CD4-positive, alpha-beta memory T cell (primary cell): ENCODE measurements at regions of chr6 and their contacts with region 1.

Region 1: GRCh38 chr6:53294095-53294494 is 54.7 kb downstream of the ELOVL5 start:
- DNase-seq: no peak
- H3K4me3 ChIP-seq: no peak overlapping the region
- H3K4me3 Mint-ChIP-seq: peak overlapping the region in 2 of 8 donors; percentile 6 to 34
- H3K27ac ChIP-seq: peak overlapping the region; percentile 27
- H3K27ac Mint-ChIP-seq: peak overlapping the region; percentile 53 to 94 (median 83)
- H3K4me1 ChIP-seq: peaks cover 97% of the 10 kb centered on the region
- H3K4me1 Mint-ChIP-seq: peaks cover 69 to 97% (median 83%) of the 10 kb centered on the region in 4 donors
- H3K27me3 ChIP-seq: no peaks in the 10 kb centered on the region
- H3K27me3 Mint-ChIP-seq: no peaks in the 10 kb centered on the region

Region 2: GRCh38 chr6:52741872-52742271 is 552.2 kb before region 1 on chr6:
- CTCF ChIA-PET with region 1: no interaction called
- POLR2A ChIA-PET with region 1: no interaction called
- intact Hi-C with region 1: no loop called
- DNase-seq: no peak
- H3K4me3 ChIP-seq: no peak overlapping the region
- H3K4me3 Mint-ChIP-seq: no peak overlapping the region
- H3K27ac ChIP-seq: no peak overlapping the region
- H3K27ac Mint-ChIP-seq: no peak overlapping the region
- H3K4me1 ChIP-seq: no peaks in the 10 kb centered on the region
- H3K4me1 Mint-ChIP-seq: no peaks in the 10 kb centered on the region
- H3K27me3 ChIP-seq: no peaks in the 10 kb centered on the region
- H3K27me3 Mint-ChIP-seq: peaks cover 11 to 22% of the 10 kb centered on the region in 2 donors

Region 3: GRCh38 chr6:53189554-53189953 is 104.5 kb before region 1 on chr6:
- CTCF ChIA-PET with region 1: interaction called, 3 read pairs
- POLR2A ChIA-PET with region 1: no interaction called
- intact Hi-C with region 1: loop called (anchors 5 kb)
- DNase-seq: no peak
- H3K4me3 ChIP-seq: no peak overlapping the region
- H3K4me3 Mint-ChIP-seq: peak overlapping the region in 1 of 8 donors; percentile 7
- H3K27ac ChIP-seq: no peak overlapping the region
- H3K27ac Mint-ChIP-seq: no peak overlapping the region
- H3K4me1 ChIP-seq: peaks cover 22% of the 10 kb centered on the region
- H3K4me1 Mint-ChIP-seq: peaks cover 6 to 23% (median 19%) of the 10 kb centered on the region in 4 donors
- H3K27me3 ChIP-seq: no peaks in the 10 kb centered on the region
- H3K27me3 Mint-ChIP-seq: no peaks in the 10 kb centered on the region

Region 4: DNA sequence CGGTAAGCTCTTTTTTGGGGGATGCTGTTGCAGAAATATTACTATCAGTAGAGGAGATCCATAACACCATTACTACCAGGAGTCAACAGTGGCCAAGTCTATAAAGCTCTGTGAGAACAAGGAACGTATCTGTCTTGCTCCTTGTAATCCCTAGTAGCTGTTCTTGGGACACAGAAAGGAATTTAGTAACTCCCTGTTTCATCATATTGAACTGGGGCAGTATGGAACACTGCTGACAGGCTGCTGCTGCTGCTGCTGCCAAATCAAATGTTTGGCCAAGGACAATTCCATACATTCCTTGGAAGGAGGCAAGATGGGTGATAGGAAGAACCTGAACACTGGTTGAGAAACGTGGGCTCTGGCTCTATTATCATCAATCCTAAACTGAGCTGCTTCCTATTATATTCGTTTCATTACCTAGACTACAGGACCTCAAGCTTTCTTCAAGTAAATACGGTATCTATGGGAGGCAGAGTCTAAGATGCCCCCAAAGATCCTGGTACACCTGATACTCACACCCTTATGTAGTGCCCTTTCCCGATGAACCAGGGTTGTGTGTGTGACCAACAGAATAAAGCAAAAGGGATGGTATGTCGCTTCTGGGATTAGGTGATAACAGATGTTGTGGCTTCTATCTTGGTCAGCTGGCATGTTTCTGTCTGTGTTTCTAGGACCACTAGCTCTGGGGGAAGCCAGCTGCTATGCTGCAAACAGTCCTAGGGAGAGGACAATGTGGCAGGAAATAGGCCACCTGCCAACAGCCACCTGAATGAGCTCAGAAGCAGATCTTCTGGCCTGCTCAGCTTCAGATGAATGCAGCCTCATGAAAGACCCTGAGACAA is 15.2 kb after region 1 on chr6:
- CTCF ChIA-PET with region 1: interaction called, 16 read pairs
- POLR2A ChIA-PET with region 1: interaction called, 45 read pairs
- intact Hi-C with region 1: loop called (anchors 2 kb)
- DNase-seq: peak in 2 of 5 donors; percentile 24 to 48
- H3K4me3 ChIP-seq: no peak overlapping the region
- H3K4me3 Mint-ChIP-seq: peak overlapping the region in 7 of 8 donors; percentile 53 to 83 (median 65)
- H3K27ac ChIP-seq: peak overlapping the region; percentile 51
- H3K27ac Mint-ChIP-seq: peak overlapping the region; percentile 79 to 93 (median 85)
- H3K4me1 ChIP-seq: peaks cover 80% of the 10 kb centered on the region
- H3K4me1 Mint-ChIP-seq: peaks cover 72 to 84% (median 79%) of the 10 kb centered on the region in 4 donors
- H3K27me3 ChIP-seq: no peaks in the 10 kb centered on the region
- H3K27me3 Mint-ChIP-seq: no peaks in the 10 kb centered on the region

Region 5: DNA sequence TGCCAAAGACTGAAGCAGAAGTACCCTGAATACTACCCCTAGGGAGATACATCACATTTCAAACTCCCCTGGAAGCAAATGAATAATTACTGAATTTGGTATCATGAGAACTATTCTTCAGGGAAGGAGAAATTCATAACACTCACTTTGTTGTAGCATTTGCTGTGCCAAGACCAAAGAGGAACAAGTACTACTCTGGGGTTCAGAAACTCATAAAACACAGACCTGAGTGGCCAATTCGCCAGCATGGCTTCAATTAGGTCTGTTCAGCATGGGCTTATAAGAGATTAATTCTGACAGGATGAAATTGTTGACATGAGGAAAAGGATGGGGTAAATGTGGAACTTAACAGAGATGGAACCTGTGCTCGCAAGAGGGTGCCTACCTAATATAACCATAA is 48.1 kb after region 1 on chr6:
- CTCF ChIA-PET with region 1: interaction called, 21 read pairs
- POLR2A ChIA-PET with region 1: interaction called, 130 read pairs
- intact Hi-C with region 1: loop called (anchors 1 kb)
- DNase-seq: no peak
- H3K4me3 ChIP-seq: no peak overlapping the region
- H3K4me3 Mint-ChIP-seq: peak overlapping the region in 6 of 8 donors; percentile 41 to 63 (median 54)
- H3K27ac ChIP-seq: no peak overlapping the region
- H3K27ac Mint-ChIP-seq: peak overlapping the region; percentile 37 to 98 (median 78)
- H3K4me1 ChIP-seq: peaks cover 95% of the 10 kb centered on the region
- H3K4me1 Mint-ChIP-seq: peaks cover 87 to 95% (median 91%) of the 10 kb centered on the region in 4 donors
- H3K27me3 ChIP-seq: no peaks in the 10 kb centered on the region
- H3K27me3 Mint-ChIP-seq: no peaks in the 10 kb centered on the region